Endothelial cell of umbilical vein (primary cell): ENCODE measurements at regions of chr15 and their contacts with region 1.

Region 1: GRCh38 chr15:51312166-51313097 is 26.0 kb downstream of the CYP19A1 start:
- DNase-seq: no peak
- H3K4me3 ChIP-seq: no peak overlapping the region
- H3K27ac ChIP-seq: no peak overlapping the region
- H3K4me1 ChIP-seq: no peaks in the 10 kb centered on the region
- H3K27me3 ChIP-seq: peaks cover 85 to 91% of the 10 kb centered on the region in 2 experiments
- CTCF ChIP-seq: no peak
- POLR2A ChIP-seq: no peak

Region 2: GRCh38 chr15:51077221-51078153 is 234.9 kb before region 1 on chr15:
- CTCF ChIA-PET with region 1: no interaction called
- POLR2A ChIA-PET with region 1: no interaction called
- dilution Hi-C with region 1: no loop called
- intact Hi-C with region 1: no loop called
- DNase-seq: peak; percentile 62
- H3K4me3 ChIP-seq: peak overlapping the region in 1 of 3 experiments; percentile 20
- H3K27ac ChIP-seq: peak overlapping the region; percentile 62
- H3K4me1 ChIP-seq: peaks cover 3% of the 10 kb centered on the region
- H3K27me3 ChIP-seq: no peaks in the 10 kb centered on the region
- CTCF ChIP-seq: no peak
- POLR2A ChIP-seq: peak; percentile 50

Region 3: GRCh38 chr15:51299187-51300066 is 13.0 kb before region 1 on chr15:
- CTCF ChIA-PET with region 1: interaction called, 11 read pairs
- POLR2A ChIA-PET with region 1: no interaction called
- dilution Hi-C with region 1: no loop called
- intact Hi-C with region 1: no loop called
- DNase-seq: no peak
- H3K4me3 ChIP-seq: no peak overlapping the region
- H3K27ac ChIP-seq: no peak overlapping the region
- H3K4me1 ChIP-seq: no peaks in the 10 kb centered on the region
- H3K27me3 ChIP-seq: peaks cover 83 to 84% of the 10 kb centered on the region in 2 experiments
- CTCF ChIP-seq: no peak
- POLR2A ChIP-seq: no peak

Region 4: DNA sequence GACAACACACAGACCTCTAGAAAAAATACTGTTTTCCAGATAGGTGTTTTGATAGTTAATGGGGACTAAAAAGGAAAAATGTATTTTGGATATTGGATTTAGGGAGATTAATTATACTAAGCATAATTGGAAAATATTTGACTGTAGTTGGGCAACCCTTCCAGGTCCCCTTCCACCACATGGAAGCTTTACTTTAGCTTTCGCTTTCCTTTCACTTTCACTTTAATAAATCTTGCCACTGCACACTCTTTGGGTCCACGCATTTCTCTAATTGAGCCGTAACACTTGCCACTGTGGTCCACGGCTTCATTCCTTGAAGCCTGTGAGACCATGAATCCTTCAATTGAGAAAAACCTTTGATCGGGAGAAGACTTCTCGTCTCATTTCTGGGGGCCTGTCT is 44.6 kb after region 1 on chr15:
- CTCF ChIA-PET with region 1: no interaction called
- POLR2A ChIA-PET with region 1: no interaction called
- dilution Hi-C with region 1: no loop called
- intact Hi-C with region 1: no loop called
- DNase-seq: no peak
- H3K4me3 ChIP-seq: no peak overlapping the region
- H3K27ac ChIP-seq: no peak overlapping the region
- H3K4me1 ChIP-seq: no peaks in the 10 kb centered on the region
- H3K27me3 ChIP-seq: peaks cover 53 to 54% of the 10 kb centered on the region in 2 experiments
- CTCF ChIP-seq: no peak
- POLR2A ChIP-seq: no peak